Ovary (tissue), 10 donors: ENCODE measurements at regions of chr1 and their contacts with region 1.

Region 1: GRCh38 chr1:181482521-181483284 is 614 bp upstream of the CACNA1E start:
- DNase-seq: no peak
- H3K4me3 ChIP-seq: no peak overlapping the region
- H3K27ac ChIP-seq: no peak overlapping the region
- H3K4me1 ChIP-seq: no peaks in the 10 kb centered on the region
- H3K27me3 ChIP-seq: no peaks in the 10 kb centered on the region
- CTCF ChIP-seq: no peak
- EP300 ChIP-seq: no peak
- POLR2A ChIP-seq: no peak

Region 2: DNA sequence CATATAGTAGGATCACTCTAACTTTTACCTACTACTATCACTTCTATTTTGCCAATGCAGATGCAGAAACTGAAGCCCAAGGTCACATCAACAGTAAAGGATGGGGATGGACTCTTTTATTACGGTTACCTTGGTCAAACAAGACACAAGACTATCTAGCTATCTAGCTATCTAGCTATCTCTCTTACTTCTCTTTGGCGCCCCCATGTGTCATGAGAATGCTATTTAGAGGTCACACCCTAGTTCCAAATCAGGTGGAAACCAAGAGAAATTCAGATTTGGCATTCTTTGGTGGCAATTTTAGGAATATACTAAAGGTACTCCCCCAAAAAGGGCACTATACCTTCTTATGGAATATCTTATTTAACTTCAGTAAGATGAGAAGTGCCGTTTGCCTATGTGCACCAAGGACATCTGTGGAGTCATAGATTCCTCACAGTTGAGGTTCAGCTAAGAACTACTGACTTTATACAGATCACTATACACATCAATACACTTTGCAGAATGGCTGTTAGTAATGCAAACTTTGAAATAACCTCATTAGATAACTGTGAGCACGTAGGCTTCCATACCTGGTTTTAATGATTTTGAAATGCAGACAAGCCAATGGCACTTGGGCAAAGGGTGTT is 572.1 kb after region 1 on chr1:
- intact Hi-C with region 1: loop called in 1 of 4 experiments (anchors 10 kb)
- DNase-seq: no peak
- H3K4me3 ChIP-seq: no peak overlapping the region
- H3K27ac ChIP-seq: no peak overlapping the region
- H3K4me1 ChIP-seq: no peaks in the 10 kb centered on the region
- H3K27me3 ChIP-seq: no peaks in the 10 kb centered on the region
- CTCF ChIP-seq: no peak
- EP300 ChIP-seq: no peak
- POLR2A ChIP-seq: no peak